ENCODE measurements at regions of chr2 and their contacts with region 1.

Region 1: GRCh38 chr2:232838406-232838874 is 31.6 kb upstream of the SNORC start:
- DNase-seq: peak; percentile 77
- H3K4me3 ChIP-seq: no peak overlapping the region
- H3K27ac ChIP-seq: peak overlapping the region; percentile 48
- H3K4me1 ChIP-seq: peaks cover 40% of the 10 kb centered on the region
- H3K27me3 ChIP-seq: no peaks in the 10 kb centered on the region
- CTCF ChIP-seq: no peak
- POLR2A ChIP-seq: peak; percentile 36

Region 2: DNA sequence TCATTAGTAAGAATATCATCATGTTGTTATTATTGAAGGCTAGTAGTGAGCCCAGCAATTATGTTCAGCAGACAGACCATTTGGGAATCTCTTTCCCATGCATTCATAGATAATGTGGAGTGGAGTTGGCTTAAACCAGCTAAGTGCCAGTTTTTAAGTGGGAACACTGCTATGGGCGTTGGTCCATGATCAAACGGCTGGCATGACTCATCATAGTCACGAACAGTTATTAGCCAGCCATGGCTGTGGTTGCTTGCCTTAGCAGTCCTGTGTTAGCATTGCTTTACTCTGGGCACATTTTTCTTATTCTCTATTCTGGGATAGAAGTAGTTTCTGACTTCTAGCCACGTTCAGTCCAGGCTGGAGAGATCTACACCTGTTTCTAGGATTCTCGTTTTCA is 270.3 kb before region 1 on chr2:
- CTCF ChIA-PET with region 1: no interaction called
- POLR2A ChIA-PET with region 1: no interaction called
- dilution Hi-C with region 1: no loop called
- intact Hi-C with region 1: no loop called
- DNase-seq: no peak
- H3K4me3 ChIP-seq: no peak overlapping the region
- H3K27ac ChIP-seq: no peak overlapping the region
- H3K4me1 ChIP-seq: no peaks in the 10 kb centered on the region
- H3K27me3 ChIP-seq: no peaks in the 10 kb centered on the region
- CTCF ChIP-seq: no peak
- POLR2A ChIP-seq: no peak

Region 3: DNA sequence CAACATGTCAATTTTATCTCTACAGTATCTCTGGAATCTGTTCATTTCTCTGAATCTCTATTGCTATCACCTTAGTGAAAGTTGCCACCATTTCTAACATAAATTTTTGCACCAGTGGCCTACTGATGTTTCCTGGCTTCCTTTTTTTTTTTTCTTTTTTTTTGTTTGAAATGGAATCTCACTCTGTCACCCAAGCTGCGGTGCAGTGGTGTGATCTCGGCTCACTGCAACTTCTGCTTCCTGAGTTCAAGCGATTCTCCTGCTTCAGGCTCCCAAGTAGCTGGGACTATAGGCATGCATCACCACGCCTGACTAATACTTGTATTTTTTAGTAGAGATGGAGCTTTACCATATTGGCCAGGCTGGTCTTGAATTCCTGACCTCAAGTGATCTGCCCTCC is 97.1 kb before region 1 on chr2:
- CTCF ChIA-PET with region 1: no interaction called
- POLR2A ChIA-PET with region 1: no interaction called
- dilution Hi-C with region 1: no loop called
- intact Hi-C with region 1: no loop called
- DNase-seq: no peak
- H3K4me3 ChIP-seq: no peak overlapping the region
- H3K27ac ChIP-seq: no peak overlapping the region
- H3K4me1 ChIP-seq: no peaks in the 10 kb centered on the region
- H3K27me3 ChIP-seq: no peaks in the 10 kb centered on the region
- CTCF ChIP-seq: no peak
- POLR2A ChIP-seq: no peak

Region 4: GRCh38 chr2:232809349-232810124 is 28.9 kb before region 1 on chr2:
- CTCF ChIA-PET with region 1: interaction called, 5 read pairs
- POLR2A ChIA-PET with region 1: interaction called, 13 read pairs
- dilution Hi-C with region 1: no loop called
- intact Hi-C with region 1: no loop called
- DNase-seq: no peak
- H3K4me3 ChIP-seq: no peak overlapping the region
- H3K27ac ChIP-seq: no peak overlapping the region
- H3K4me1 ChIP-seq: no peaks in the 10 kb centered on the region
- H3K27me3 ChIP-seq: no peaks in the 10 kb centered on the region
- CTCF ChIP-seq: no peak
- POLR2A ChIP-seq: no peak

Measured in endothelial cell of umbilical vein (primary cell).